T-cell (primary cell): ENCODE measurements at regions of chr10 and their contacts with region 1.

Region 1: GRCh38 chr10:24931236-24931635 is 21.2 kb downstream of the PRTFDC1 start:
- DNase-seq: no peak
- ATAC-seq: no peak
- H3K4me3 ChIP-seq: no peak overlapping the region
- H3K4me3 Mint-ChIP-seq: no peak overlapping the region
- H3K27ac ChIP-seq: no peak overlapping the region
- H3K27ac Mint-ChIP-seq: no peak overlapping the region
- H3K4me1 ChIP-seq: peaks cover 3 to 17% of the 10 kb centered on the region in 2 experiments
- H3K4me1 Mint-ChIP-seq: peaks cover 10 to 23% (median 19%) of the 10 kb centered on the region in 3 donors
- H3K27me3 ChIP-seq: no peaks in the 10 kb centered on the region
- H3K27me3 Mint-ChIP-seq: no peaks in the 10 kb centered on the region

Region 2: DNA sequence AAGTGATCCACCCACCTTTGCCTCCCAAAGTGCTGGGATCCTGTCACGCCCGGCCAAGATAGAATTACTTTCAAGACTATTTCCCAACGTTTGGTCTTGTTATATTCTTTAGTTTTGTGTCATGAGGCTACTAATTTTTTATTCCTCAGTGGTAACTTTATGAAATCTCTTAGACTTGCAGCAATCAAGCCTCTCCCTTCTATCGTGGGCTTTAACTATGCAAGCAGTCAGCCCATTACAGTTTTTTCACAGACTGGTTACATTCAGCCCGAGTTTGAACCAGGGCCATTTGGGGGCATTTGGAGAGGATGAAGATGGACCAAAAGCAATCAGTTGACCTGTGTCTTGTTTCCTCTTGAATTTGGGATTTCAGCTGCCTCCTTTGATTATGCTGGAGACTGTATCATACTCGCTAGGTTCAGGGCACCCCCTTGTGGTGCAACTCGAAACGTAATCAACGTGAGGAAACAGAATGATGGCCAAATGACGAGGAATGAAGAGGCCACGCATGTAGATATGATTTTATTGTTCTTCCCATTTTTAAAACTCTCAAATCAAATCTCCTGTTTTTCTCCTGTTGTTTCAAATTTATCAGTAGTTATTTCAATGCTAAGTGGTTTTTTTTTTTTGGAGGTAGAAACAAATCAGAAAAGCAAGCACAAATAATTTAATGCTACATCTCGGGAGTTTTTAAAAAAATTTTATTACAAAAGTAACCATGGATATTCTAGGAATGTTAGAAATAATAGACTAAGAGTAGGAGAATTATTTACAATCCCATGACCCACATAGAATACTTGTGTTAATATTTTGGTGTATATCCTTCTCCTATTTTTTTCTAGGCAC is 570.7 kb before region 1 on chr10:
- CTCF ChIA-PET with region 1: no interaction called
- POLR2A ChIA-PET with region 1: interaction called in 1 of 2 experiments, 11 read pairs
- DNase-seq: peak in 2 of 35 experiments; percentile 2 to 10
- ATAC-seq: no peak
- H3K4me3 ChIP-seq: no peak overlapping the region
- H3K4me3 Mint-ChIP-seq: no peak overlapping the region
- H3K27ac ChIP-seq: no peak overlapping the region
- H3K27ac Mint-ChIP-seq: no peak overlapping the region
- H3K4me1 ChIP-seq: no peaks in the 10 kb centered on the region
- H3K4me1 Mint-ChIP-seq: no peaks in the 10 kb centered on the region
- H3K27me3 ChIP-seq: peaks cover 0 to 2% of the 10 kb centered on the region in 2 experiments
- H3K27me3 Mint-ChIP-seq: peaks cover 2 to 4% of the 10 kb centered on the region in 2 donors

Region 3: DNA sequence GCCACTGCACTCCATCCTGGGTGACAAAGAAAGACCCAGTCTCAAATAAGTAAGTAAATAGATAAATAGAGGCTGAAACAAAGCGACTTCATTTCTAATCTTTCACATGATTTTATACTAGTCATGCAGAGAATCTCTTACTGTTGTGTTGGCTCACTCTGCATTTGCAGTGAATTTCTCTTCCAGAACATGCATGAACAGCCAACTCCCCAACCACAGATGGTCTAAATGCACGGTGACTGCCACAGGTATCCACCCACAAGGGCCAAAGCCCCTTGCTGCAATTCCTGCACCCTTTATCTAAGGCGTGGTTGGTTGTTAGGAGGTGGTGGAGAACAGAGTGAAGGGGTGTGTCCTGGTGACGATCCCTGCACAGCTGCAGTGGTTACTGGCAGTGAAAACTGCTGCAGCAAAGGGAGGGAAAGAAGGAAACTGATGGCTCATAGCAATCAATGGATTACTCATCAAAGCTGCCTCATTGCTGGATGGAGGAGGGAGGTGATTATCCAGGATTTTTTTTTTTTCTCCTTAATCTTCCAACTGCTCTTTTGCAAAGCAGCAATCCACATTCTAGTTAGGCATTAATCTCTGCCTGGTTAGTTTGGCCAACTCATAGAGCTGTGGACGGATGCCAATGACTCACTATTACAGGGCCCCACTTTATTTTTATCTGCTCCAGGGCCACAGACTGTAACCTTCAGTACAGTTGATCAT is 29.4 kb before region 1 on chr10:
- CTCF ChIA-PET with region 1: no interaction called
- POLR2A ChIA-PET with region 1: no interaction called
- DNase-seq: no peak
- ATAC-seq: no peak
- H3K4me3 ChIP-seq: no peak overlapping the region
- H3K4me3 Mint-ChIP-seq: peak overlapping the region in 1 of 3 donors; percentile 27
- H3K27ac ChIP-seq: no peak overlapping the region
- H3K27ac Mint-ChIP-seq: peak overlapping the region; percentile 47 to 79
- H3K4me1 ChIP-seq: peaks cover 8 to 16% of the 10 kb centered on the region in 2 experiments
- H3K4me1 Mint-ChIP-seq: peaks cover 34 to 42% (median 36%) of the 10 kb centered on the region in 3 donors
- H3K27me3 ChIP-seq: no peaks in the 10 kb centered on the region
- H3K27me3 Mint-ChIP-seq: no peaks in the 10 kb centered on the region